ENCODE measurements at regions of chr2 and their contacts with region 1.

Region 1: DNA sequence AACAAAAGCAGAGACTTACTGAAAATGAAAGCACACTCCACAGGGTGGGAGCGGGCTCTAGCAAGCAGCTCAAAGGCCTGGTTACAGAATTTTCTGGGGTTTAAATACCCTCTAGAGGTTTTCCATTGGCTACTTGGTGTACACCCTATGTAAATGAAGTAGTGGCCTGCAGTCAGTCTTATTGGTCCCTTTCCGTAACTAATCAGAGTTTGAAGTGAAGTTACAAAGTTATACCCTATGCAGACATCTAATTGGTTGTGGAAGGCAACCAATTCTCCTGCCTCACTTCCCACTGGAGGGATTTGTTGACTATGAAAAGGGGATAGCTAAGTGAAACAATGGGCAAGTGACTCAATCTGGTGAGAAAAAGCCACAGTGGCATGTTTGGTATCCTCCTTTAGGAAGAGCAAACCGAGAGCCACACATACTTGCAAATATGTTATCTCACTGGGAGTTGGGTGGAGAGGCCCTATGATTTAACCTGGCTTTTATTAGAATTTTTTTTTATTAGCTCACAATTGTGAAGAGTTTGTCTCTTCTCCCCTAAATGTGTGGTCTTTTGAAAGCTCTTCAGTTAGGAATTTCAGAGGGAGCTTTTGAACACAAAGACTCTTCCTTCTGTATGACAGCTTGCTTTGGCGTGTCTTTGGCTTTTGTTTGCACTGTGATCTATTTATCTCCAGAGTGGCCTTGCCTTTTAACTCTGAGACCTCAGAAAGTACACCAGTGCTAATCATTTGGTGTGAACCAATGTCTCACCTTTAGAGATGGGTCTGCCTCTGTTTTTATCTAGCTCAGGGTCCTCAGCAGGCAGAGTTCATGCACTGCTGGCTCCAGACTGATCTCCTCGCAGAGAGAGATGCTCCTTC is 69.6 kb downstream of the MAP4K4 start:
- DNase-seq: peak; percentile 60 to 89
- H3K4me3 ChIP-seq: no peak overlapping the region
- H3K27ac ChIP-seq: peak overlapping the region; percentile 73
- H3K4me1 ChIP-seq: peaks cover 73% of the 10 kb centered on the region
- H3K27me3 ChIP-seq: no peaks in the 10 kb centered on the region
- CTCF ChIP-seq: no peak

Region 2: GRCh38 chr2:101204400-101205115 is 562.5 kb before region 1 on chr2:
- CTCF ChIA-PET with region 1: no interaction called
- POLR2A ChIA-PET with region 1: no interaction called
- intact Hi-C with region 1: no loop called
- DNase-seq: no peak
- H3K4me3 ChIP-seq: no peak overlapping the region
- H3K27ac ChIP-seq: no peak overlapping the region
- H3K4me1 ChIP-seq: peaks cover 9% of the 10 kb centered on the region; the same call in 1 of the 2 replicates
- H3K27me3 ChIP-seq: no peaks in the 10 kb centered on the region
- CTCF ChIP-seq: peak; percentile 26; the same call in 1 of the 2 replicates

Region 3: GRCh38 chr2:101806123-101806522 is 39.0 kb after region 1 on chr2:
- CTCF ChIA-PET with region 1: interaction called, 9 read pairs
- POLR2A ChIA-PET with region 1: no interaction called
- intact Hi-C with region 1: loop called (anchors 2 kb)
- DNase-seq: peak; percentile 70 to 90
- H3K4me3 ChIP-seq: peak overlapping the region; percentile 11; the same call in 1 of the 2 replicates
- H3K27ac ChIP-seq: peak overlapping the region; percentile 80
- H3K4me1 ChIP-seq: peaks cover 68% of the 10 kb centered on the region
- H3K27me3 ChIP-seq: no peaks in the 10 kb centered on the region
- CTCF ChIP-seq: no peak

Region 4: GRCh38 chr2:102120701-102121159 is 353.6 kb after region 1 on chr2:
- CTCF ChIA-PET with region 1: no interaction called
- POLR2A ChIA-PET with region 1: interaction called, 10 read pairs
- intact Hi-C with region 1: no loop called
- DNase-seq: no peak
- H3K4me3 ChIP-seq: no peak overlapping the region
- H3K27ac ChIP-seq: no peak overlapping the region
- H3K4me1 ChIP-seq: peaks cover 20% of the 10 kb centered on the region
- H3K27me3 ChIP-seq: no peaks in the 10 kb centered on the region
- CTCF ChIP-seq: no peak

Measured in PC-9 (cell line).